Psoas muscle (tissue), 8 donors: ENCODE measurements at regions of chr5 and their contacts with region 1.

Region 1: DNA sequence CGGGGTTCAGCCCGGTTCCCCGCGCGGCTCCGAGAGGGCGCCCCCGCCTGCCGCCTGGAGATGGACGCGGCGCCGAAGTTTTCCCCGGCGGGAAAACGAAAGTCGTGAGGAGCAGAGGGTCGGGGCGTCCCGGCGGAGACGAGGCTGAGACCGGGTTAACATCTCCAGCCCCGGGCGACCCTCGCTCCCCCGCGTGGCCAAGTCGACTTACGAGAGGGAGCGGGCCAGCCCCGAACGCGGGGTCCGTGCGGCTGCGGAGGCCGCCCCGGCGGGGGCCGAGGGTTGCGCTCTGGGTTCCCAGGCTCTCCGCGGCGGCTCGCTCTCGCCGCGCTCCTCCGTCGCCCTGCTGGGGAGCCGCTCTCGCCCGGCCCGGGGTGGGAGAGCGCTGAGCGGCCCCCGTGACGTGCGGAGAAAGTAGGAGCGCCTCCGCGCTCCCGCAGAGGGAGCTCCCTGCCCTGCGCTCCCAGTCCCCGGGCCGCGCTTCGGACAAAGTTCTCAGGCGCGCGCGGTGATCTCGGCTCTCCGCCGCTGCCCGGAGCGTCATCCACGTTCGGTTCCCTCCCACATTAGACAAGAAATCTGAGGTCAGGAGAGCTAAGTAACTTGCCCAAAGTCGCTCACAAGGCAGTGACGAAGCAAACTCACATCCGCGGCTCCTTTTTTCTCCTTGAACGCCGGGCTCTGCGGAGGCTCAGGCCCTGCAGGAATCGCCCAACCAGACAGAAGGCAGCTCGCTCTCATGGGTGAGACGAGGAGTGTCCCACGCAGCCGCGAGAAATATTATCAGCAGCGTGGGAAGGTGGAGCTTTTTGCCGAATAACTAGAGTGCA is 1.2 kb upstream of the GCNT4 start:
- DNase-seq: peak; percentile 67 to 80
- ATAC-seq: peak; percentile 69 to 82 (median 76)
- H3K4me3 ChIP-seq: peak overlapping the region; percentile 90
- H3K27ac ChIP-seq: peak overlapping the region; percentile 88
- H3K4me1 ChIP-seq: peaks cover 11% of the 10 kb centered on the region
- H3K27me3 ChIP-seq: no peaks in the 10 kb centered on the region
- CTCF ChIP-seq: peak; percentile 4

Region 2: DNA sequence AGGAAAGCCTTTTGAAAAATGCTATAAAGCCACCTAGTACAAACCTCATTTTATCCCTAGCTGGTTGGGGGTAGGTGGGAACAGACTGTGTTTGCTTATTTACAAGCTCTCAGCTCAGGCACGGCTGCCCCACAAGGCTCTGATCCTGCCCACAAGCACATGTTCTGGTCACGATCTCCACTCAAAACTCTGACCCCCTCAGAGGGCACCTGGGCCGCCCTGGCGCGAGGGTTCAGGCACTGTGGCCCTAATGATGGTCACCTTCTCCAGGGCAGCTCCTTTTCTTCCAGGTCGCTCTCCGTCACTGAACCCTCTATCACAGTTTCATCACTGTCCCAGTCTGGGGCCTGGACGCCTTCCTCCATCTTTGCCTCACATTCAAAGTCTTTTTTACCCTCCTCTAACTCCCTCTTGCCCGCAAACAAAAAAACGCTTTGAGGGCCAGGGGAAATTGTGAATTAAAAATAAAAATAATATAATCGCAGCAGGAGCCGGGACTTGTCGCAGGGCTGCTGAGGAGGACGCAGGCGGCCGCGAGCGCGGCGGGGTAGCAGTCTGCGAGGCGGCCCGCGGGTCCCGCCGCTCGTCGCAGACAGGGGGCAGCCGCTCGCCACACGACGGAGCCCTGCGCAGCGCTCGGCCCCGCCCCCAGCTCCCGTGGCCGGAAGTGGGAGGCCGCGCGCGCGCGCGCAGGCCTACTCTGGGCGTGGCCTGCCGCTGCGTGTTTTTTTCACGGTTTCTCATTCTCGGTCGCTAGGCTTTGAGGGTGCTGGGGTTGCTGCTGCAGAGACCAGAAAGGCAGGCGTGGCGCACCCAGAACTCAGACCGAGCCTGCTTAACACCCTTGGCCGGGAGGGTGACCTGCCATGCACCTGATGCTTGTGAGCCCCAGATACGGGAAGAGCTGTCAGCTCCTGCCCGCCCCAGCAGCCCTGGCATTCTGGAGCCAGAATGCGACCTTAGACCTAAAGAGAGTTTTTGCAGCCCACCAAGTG is 183.1 kb after region 1 on chr5 and contains the start of gene ANKRD31:
- intact Hi-C with region 1: loop called in 1 of 2 experiments (anchors 5 kb)
- DNase-seq: peak; percentile 88 to 90
- ATAC-seq: peak; percentile 100
- H3K4me3 ChIP-seq: peak within 1 kb of the TSS; percentile 73
- H3K27ac ChIP-seq: peak within 1 kb of the TSS; percentile 2
- H3K4me1 ChIP-seq: no peaks in the 10 kb centered on the region
- H3K27me3 ChIP-seq: no peaks in the 10 kb centered on the region
- CTCF ChIP-seq: peak; percentile 85
- total RNA-seq, gene ANKRD31: 0.04 to 0.11 (median 0.06) TPM in 3 of 4 donors, not detected in the other

Region 3: GRCh38 chr5:75265731-75266130 is 212.2 kb after region 1 on chr5:
- intact Hi-C with region 1: loop called (anchors 10 kb)
- DNase-seq: no peak
- ATAC-seq: no peak
- H3K4me3 ChIP-seq: no peak overlapping the region
- H3K27ac ChIP-seq: no peak overlapping the region
- H3K4me1 ChIP-seq: no peaks in the 10 kb centered on the region
- H3K27me3 ChIP-seq: no peaks in the 10 kb centered on the region
- CTCF ChIP-seq: peak; percentile 37